ENCODE measurements at regions of chr15 and their contacts with region 1.

Region 1: DNA sequence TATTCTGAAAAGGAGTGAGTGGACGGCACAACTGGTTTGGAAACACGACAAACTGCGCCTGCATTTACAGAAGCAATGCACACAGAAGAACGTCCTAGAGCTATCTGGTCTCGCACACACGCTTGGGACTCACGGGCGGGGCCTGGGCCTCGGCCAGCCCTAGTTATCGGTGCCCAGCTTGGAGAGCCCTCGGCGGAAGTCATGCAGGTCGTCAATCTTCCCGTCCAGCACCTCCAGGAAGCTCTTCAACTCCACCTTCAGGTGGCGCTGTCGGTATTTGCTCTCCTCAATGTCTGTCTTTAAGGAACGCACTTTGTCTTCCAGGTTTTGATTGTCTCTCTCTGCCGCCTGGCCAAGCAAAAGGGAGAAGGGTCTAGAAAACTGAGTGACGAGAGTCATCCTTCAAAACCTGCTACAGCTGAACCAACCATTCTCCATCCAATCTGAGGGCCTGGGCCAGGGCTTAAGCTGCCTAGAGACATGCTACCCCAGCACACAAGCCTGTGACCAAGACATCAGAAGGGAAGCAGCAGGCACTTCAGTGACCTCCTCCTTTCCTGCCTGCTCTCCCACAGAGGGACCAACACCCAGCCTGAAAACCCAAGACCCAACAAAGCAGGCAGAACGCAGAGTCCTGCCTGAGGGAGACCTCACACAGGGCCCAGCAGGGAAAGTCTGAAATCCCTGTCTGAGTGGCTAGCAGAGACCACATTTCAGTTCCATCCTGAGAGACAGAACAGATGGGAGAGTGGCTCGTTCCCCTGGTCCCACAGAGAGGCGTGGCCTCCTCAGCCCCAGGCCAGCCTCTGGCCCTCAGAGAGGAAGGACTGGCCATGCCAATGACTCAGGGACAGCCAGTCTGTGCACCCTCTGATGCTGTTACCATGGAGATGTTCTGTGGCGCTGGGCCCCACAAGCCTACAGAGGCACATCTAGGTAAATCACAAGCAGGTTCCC is 40.4 kb downstream of the WHAMM start:
- DNase-seq: peak; percentile 56
- H3K4me3 ChIP-seq: no peak overlapping the region
- H3K27ac ChIP-seq: no peak overlapping the region
- H3K4me1 ChIP-seq: no peaks in the 10 kb centered on the region
- H3K27me3 ChIP-seq: peaks cover 0 to 2% of the 10 kb centered on the region in 2 experiments
- CTCF ChIP-seq: peak; percentile 67 to 68
- POLR2A ChIP-seq: no peak

Region 2: GRCh38 chr15:82832601-82833361 is 17.1 kb before region 1 on chr15:
- CTCF ChIA-PET with region 1: interaction called, 10 read pairs
- POLR2A ChIA-PET with region 1: no interaction called
- dilution Hi-C with region 1: no loop called
- intact Hi-C with region 1: no loop called
- DNase-seq: peak; percentile 45
- H3K4me3 ChIP-seq: no peak overlapping the region
- H3K27ac ChIP-seq: peak overlapping the region; percentile 24
- H3K4me1 ChIP-seq: peaks cover 16% of the 10 kb centered on the region
- H3K27me3 ChIP-seq: no peaks in the 10 kb centered on the region
- CTCF ChIP-seq: no peak
- POLR2A ChIP-seq: no peak

Region 3: GRCh38 chr15:82952158-82953081 is 102.6 kb after region 1 on chr15 and contains the start of gene HOMER2:
- CTCF ChIA-PET with region 1: no interaction called
- POLR2A ChIA-PET with region 1: no interaction called
- dilution Hi-C with region 1: no loop called
- intact Hi-C with region 1: loop called (anchors 10 kb)
- DNase-seq: no peak
- H3K4me3 ChIP-seq: peak within 1 kb of the TSS in 2 of 3 experiments; percentile 11 to 28
- H3K27ac ChIP-seq: no peak within 1 kb of the TSS
- H3K4me1 ChIP-seq: peaks cover 2% of the 10 kb centered on the region
- H3K27me3 ChIP-seq: peaks cover 16 to 29% of the 10 kb centered on the region in 2 experiments
- CTCF ChIP-seq: no peak
- POLR2A ChIP-seq: no peak
- total RNA-seq, gene HOMER2: 0.60 and 0.97 TPM in 2 replicates

Region 4: DNA sequence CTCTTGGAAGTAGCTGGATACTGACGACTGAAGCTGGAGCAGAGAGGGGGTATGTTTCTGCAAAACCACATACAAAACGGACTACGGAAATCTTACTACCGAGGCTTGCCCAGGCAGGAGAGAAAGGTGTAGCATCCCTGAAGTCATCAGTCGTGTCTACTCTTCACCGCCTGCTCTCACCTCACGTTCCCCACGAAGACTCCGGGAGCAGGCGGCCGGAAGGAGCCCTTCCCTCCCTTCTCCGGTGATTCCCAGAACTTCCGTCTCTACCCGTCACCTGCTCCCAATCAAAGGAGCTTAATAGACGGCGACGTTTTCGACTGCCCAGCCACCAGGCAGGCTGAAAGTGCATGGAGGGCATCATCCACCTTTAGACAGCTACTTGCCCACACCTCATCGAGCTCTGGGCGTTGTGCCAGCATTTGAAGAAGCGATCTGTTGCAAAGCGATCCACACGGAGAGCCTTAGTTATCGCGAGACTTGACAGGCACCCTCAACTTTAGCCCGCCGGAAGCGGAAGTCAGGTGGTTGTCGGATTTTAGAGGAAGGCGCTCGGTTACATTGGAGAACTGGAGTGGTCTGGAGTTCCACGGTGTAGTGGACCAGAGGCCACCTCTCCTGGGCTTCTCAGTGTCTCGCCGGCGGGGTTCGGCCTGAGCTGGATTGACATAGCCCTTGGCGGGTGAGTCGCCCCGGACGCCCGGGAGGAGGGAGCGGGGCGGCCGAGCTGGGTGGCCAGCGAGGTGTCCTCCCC is 136.0 kb after region 1 on chr15 and contains the start of gene RAMAC:
- CTCF ChIA-PET with region 1: interaction called, 8 read pairs
- POLR2A ChIA-PET with region 1: no interaction called
- dilution Hi-C with region 1: no loop called
- intact Hi-C with region 1: loop called (anchors 1 kb)
- DNase-seq: peak; percentile 92
- H3K4me3 ChIP-seq: peak within 1 kb of the TSS; percentile 65 to 88 (median 87)
- H3K27ac ChIP-seq: peak within 1 kb of the TSS; percentile 28
- H3K4me1 ChIP-seq: peaks cover 4% of the 10 kb centered on the region
- H3K27me3 ChIP-seq: no peaks in the 10 kb centered on the region
- CTCF ChIP-seq: no peak
- POLR2A ChIP-seq: peak; percentile 60
- total RNA-seq, gene RAMAC: 14.1 and 15.2 TPM in 2 replicates

Region 5: DNA sequence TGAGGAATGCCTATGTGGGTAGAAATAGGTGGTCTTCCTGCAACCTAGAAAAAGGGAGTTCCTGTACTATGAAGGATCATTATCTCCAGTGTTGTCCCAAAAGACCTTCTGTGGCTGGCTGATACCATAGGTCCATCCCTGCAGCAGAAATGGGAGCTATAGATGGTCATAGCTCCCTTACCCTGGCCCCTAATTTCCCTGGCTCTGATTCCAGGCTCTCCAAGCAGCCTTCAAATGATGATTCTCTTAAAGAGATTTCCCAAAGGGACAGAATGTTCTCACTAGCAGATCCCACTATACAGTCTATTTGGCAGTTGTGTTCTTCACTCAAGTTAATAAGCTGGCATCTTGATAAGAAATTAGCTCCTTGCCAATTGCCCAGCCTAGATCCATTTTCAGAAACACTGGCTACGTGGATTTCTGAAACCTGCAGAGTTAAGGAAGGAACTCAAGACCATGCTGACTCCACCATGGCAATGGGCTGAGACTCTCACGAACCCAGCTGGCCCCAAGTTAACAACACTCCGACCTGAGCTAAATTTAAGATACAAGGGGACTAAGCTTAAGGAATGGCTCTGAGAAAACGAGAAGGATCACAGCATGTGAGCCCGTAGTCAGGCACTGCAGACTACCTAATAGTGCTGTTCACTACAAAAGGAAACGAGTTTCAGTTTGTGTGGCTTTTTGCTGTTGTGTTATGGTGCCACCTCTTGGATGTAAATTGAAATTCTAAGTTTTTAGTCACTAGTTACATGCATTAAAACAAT is 150.3 kb after region 1 on chr15:
- CTCF ChIA-PET with region 1: interaction called, 14 read pairs
- POLR2A ChIA-PET with region 1: no interaction called
- dilution Hi-C with region 1: no loop called
- intact Hi-C with region 1: loop called (anchors 1 kb)
- DNase-seq: peak; percentile 71
- H3K4me3 ChIP-seq: peak overlapping the region in 2 of 3 experiments; percentile 36 to 38
- H3K27ac ChIP-seq: no peak overlapping the region
- H3K4me1 ChIP-seq: peaks cover 3% of the 10 kb centered on the region
- H3K27me3 ChIP-seq: no peaks in the 10 kb centered on the region
- CTCF ChIP-seq: peak; percentile 24 to 51
- POLR2A ChIP-seq: no peak